RWPE1 (cell line): ENCODE measurements at regions of chr1 and their contacts with region 1.

Region 1: DNA sequence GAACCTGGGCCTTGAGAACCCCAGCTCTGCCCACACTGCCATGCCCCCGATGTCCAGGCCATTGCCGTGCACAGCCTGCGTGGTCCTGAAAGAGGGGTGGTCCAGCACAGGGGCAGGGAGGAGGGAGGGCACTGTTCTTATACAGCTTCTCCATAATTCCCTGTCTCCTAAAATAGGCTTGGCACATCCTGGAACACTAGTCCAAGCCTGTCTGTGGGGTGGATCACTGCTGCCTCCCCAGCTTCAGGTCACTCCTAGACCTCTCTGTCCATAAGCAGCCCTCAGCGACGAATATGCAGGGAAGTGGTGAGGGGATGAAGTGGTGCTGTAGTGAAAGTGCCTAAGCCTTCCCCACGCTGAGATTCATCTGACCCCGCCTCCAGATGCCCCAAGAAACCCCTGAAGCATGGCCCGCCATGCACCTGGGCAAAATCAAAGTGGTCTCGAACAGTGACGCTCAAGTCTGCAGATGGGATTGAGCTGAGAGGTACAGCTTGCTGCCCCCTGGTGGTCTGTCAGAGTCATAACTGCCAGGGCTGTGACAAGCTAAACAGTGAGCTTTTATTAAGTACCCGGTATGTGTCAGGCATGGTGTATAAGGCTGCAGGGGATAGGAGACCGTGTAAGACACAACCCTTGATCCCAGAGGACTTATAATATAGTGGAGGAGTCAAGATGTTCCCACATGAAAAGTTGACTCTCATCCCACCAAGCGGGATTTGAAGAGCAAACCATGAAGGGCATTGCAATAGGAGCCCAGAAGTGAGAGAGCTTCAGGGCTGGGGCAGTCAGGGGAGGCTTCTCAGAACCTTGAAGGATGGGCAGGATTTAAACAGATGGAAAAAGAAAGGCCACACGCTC is 66.6 kb downstream of the FAM163A start:
- DNase-seq: peak; percentile 57
- H3K27ac ChIP-seq: no peak overlapping the region
- CTCF ChIP-seq: peak; percentile 91

Region 2: GRCh38 chr1:178776553-178776952 is 1033.2 kb before region 1 on chr1:
- CTCF ChIA-PET with region 1: interaction called, 10 read pairs
- POLR2A ChIA-PET with region 1: no interaction called
- DNase-seq: no peak
- H3K27ac ChIP-seq: no peak overlapping the region
- CTCF ChIP-seq: no peak

Region 3: GRCh38 chr1:179706339-179706941 is 103.3 kb before region 1 on chr1:
- CTCF ChIA-PET with region 1: interaction called, 85 read pairs
- POLR2A ChIA-PET with region 1: no interaction called
- DNase-seq: peak; percentile 54
- H3K27ac ChIP-seq: no peak overlapping the region
- CTCF ChIP-seq: peak; percentile 75

Region 4: GRCh38 chr1:179882243-179883039 is 72.7 kb after region 1 on chr1 and contains the start of gene TOR1AIP1:
- CTCF ChIA-PET with region 1: no interaction called
- POLR2A ChIA-PET with region 1: no interaction called
- DNase-seq: peak; percentile 90
- H3K27ac ChIP-seq: peak within 1 kb of the TSS; percentile 98
- CTCF ChIP-seq: no peak